ENCODE measurements at regions of chr12 and their contacts with region 1.

Region 1: GRCh38 chr12:93098077-93098476 is 169.0 kb upstream of the EEA1 start:
- DNase-seq: peak; percentile 78
- H3K4me3 ChIP-seq: no peak overlapping the region
- H3K27ac ChIP-seq: peak overlapping the region in 2 of 8 donors; percentile 14 to 51
- H3K4me1 ChIP-seq: peaks cover 0 to 27% (median 2%) of the 10 kb centered on the region in 6 donors
- H3K27me3 ChIP-seq: no peaks in the 10 kb centered on the region
- CTCF ChIP-seq: peak; percentile 40 to 80 (median 71)
- POLR2A ChIP-seq: no peak

Region 2: GRCh38 chr12:93174048-93174447 is 76.0 kb after region 1 on chr12:
- intact Hi-C with region 1: no loop called
- DNase-seq: no peak
- H3K4me3 ChIP-seq: no peak overlapping the region
- H3K27ac ChIP-seq: no peak overlapping the region
- H3K4me1 ChIP-seq: peaks cover 0 to 18% (median 2%) of the 10 kb centered on the region in 6 donors
- H3K27me3 ChIP-seq: no peaks in the 10 kb centered on the region
- CTCF ChIP-seq: no peak
- POLR2A ChIP-seq: no peak

Region 3: DNA sequence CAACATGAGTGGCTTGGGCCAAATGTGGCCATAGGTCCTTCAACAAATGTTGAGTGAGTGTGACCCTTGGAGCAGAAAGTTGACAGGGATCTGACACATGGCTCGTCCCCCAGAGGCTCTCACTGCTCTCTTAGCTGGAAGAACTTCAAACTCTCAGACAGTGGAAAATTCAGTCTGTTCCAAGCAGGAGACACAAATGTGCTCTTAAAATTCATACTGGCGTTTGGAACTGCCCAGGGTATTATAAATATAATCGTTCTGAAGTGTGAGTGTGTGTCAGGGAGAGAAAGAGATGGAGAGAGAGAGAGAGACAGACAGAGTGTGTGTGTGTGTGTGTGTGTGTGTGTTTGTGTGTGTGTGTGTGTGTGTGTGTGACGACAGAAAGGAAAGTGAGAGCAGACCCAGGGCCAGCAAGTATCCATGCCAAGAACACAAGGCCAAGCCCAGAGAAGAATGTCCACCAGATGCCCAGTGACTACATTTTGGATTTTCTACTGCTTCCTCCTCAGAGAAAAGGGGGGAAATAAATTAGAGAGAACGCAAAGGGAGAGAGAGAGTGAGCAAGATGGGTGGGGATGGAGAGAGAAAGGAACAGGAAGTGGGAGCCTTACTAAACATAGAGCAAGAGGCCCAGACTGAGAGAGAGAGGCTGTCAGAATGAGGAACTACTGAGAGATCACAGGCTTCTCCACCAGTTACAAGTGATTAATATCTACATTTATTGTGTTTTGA is 86.0 kb after region 1 on chr12:
- intact Hi-C with region 1: no loop called
- DNase-seq: no peak
- H3K4me3 ChIP-seq: peak overlapping the region in 1 of 8 donors; percentile 26
- H3K27ac ChIP-seq: peak overlapping the region; percentile 13 to 87 (median 78)
- H3K4me1 ChIP-seq: peaks cover 0 to 43% (median 13%) of the 10 kb centered on the region in 6 donors
- H3K27me3 ChIP-seq: no peaks in the 10 kb centered on the region
- CTCF ChIP-seq: no peak
- POLR2A ChIP-seq: no peak

Region 4: GRCh38 chr12:93380480-93381121 is 282.5 kb after region 1 on chr12:
- intact Hi-C with region 1: loop called (anchors 10 kb)
- DNase-seq: no peak
- H3K4me3 ChIP-seq: peak overlapping the region in 6 of 8 donors; percentile 66 to 86 (median 82)
- H3K27ac ChIP-seq: peak overlapping the region in 7 of 8 donors; percentile 94 to 98 (median 95)
- H3K4me1 ChIP-seq: peaks cover 23 to 87% (median 70%) of the 10 kb centered on the region in 6 donors
- H3K27me3 ChIP-seq: no peaks in the 10 kb centered on the region
- CTCF ChIP-seq: peak in 6 of 11 experiments; percentile 4 to 33 (median 24)
- POLR2A ChIP-seq: no peak

Region 5: GRCh38 chr12:93663006-93663728 is 565.1 kb after region 1 on chr12:
- intact Hi-C with region 1: no loop called
- DNase-seq: no peak
- H3K4me3 ChIP-seq: no peak overlapping the region
- H3K27ac ChIP-seq: no peak overlapping the region
- H3K4me1 ChIP-seq: no peaks in the 10 kb centered on the region
- H3K27me3 ChIP-seq: no peaks in the 10 kb centered on the region
- CTCF ChIP-seq: no peak
- POLR2A ChIP-seq: no peak